Activated CD4-positive, alpha-beta T cell treated with anti-CD3 and anti-CD28 coated beads for 36 hours (primary cell): ENCODE measurements at regions of chr19 and their contacts with region 1.

Region 1: GRCh38 chr19:12564016-12564664 is 12.9 kb upstream of the ZNF564 start:
- DNase-seq: peak; percentile 95
- ATAC-seq: peak; percentile 98
- H3K4me3 Mint-ChIP-seq: peak overlapping the region; percentile 25
- H3K27ac Mint-ChIP-seq: no peak overlapping the region
- H3K4me1 Mint-ChIP-seq: peaks cover 5% of the 10 kb centered on the region
- H3K27me3 Mint-ChIP-seq: no peaks in the 10 kb centered on the region

Region 2: DNA sequence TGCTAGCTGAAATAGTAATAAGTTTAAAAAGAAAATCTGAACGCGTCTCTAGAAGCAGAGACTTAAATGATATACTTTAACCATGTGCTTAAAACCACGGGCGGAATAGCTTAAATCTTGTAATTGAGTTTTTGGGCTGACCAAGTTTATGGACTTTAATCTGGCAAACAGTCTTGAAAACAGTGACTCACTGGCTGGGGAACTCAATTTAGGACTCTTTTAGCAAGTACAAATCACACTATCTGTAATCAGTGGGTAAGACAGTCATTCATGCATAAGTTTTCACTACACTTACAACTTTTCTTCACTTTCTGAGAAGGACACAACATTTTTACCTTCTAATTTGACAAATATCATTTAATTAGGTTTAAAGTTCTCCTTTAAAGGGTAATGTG is 940.1 kb before region 1 on chr19:
- CTCF ChIA-PET with region 1: no interaction called
- POLR2A ChIA-PET with region 1: no interaction called
- intact Hi-C with region 1: no loop called
- DNase-seq: no peak
- ATAC-seq: peak; percentile 56
- H3K4me3 Mint-ChIP-seq: no peak overlapping the region
- H3K27ac Mint-ChIP-seq: no peak overlapping the region
- H3K4me1 Mint-ChIP-seq: peaks cover 16% of the 10 kb centered on the region
- H3K27me3 Mint-ChIP-seq: peaks cover 14% of the 10 kb centered on the region

Region 3: DNA sequence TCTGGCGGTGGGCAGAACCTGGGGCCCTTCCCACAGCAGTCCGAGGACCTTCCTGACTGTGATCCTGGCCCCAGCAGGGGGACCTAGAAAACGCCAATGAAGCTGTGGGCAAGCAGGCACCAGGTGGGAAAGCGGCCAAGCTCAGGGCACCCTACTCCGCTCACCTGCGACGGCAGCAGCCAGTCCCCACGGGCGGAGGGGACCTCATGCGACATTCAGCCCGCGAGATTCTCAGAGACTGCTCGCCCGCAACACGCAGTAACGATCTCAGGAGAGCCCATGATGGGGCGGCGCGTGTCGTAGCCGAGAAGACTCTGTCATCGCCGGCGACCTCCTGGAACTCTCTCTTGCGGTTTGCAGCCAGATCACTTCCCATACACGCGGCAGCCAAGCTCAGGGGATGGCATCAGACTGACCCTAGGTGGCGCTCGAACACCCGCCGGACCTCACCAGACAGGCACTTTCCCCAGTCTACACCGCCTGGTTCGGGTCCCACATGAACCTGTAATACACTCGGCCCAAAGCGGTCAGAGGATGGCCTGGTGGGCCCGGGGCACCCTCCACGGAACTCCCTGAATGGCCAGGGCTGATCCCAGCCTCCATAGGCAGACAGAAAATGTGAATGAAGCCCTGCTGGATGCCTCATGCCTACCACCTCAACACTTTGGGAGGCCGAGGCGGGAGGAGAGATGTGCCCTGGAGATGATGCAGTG is 75.9 kb after region 1 on chr19:
- CTCF ChIA-PET with region 1: interaction called, 6 read pairs
- POLR2A ChIA-PET with region 1: no interaction called
- intact Hi-C with region 1: loop called (anchors 1 kb)
- DNase-seq: peak; percentile 95
- ATAC-seq: peak; percentile 94
- H3K4me3 Mint-ChIP-seq: peak overlapping the region; percentile 70
- H3K27ac Mint-ChIP-seq: peak overlapping the region; percentile 85
- H3K4me1 Mint-ChIP-seq: peaks cover 23% of the 10 kb centered on the region
- H3K27me3 Mint-ChIP-seq: no peaks in the 10 kb centered on the region

Region 4: GRCh38 chr19:12672744-12673143 is 108.6 kb after region 1 on chr19:
- CTCF ChIA-PET with region 1: interaction called, 7 read pairs
- POLR2A ChIA-PET with region 1: interaction called, 3 read pairs
- intact Hi-C with region 1: loop called (anchors 1 kb)
- DNase-seq: no peak
- ATAC-seq: no peak
- H3K4me3 Mint-ChIP-seq: no peak overlapping the region
- H3K27ac Mint-ChIP-seq: no peak overlapping the region
- H3K4me1 Mint-ChIP-seq: peaks cover 33% of the 10 kb centered on the region
- H3K27me3 Mint-ChIP-seq: no peaks in the 10 kb centered on the region

Region 5: GRCh38 chr19:12757544-12758274 is 193.6 kb after region 1 on chr19:
- CTCF ChIA-PET with region 1: no interaction called
- POLR2A ChIA-PET with region 1: no interaction called
- intact Hi-C with region 1: loop called in 1 of 2 experiments (anchors 1 kb)
- DNase-seq: peak; percentile 83
- ATAC-seq: peak; percentile 84
- H3K4me3 Mint-ChIP-seq: peak overlapping the region; percentile 19
- H3K27ac Mint-ChIP-seq: no peak overlapping the region
- H3K4me1 Mint-ChIP-seq: peaks cover 6% of the 10 kb centered on the region
- H3K27me3 Mint-ChIP-seq: peaks cover 20% of the 10 kb centered on the region

Region 6: DNA sequence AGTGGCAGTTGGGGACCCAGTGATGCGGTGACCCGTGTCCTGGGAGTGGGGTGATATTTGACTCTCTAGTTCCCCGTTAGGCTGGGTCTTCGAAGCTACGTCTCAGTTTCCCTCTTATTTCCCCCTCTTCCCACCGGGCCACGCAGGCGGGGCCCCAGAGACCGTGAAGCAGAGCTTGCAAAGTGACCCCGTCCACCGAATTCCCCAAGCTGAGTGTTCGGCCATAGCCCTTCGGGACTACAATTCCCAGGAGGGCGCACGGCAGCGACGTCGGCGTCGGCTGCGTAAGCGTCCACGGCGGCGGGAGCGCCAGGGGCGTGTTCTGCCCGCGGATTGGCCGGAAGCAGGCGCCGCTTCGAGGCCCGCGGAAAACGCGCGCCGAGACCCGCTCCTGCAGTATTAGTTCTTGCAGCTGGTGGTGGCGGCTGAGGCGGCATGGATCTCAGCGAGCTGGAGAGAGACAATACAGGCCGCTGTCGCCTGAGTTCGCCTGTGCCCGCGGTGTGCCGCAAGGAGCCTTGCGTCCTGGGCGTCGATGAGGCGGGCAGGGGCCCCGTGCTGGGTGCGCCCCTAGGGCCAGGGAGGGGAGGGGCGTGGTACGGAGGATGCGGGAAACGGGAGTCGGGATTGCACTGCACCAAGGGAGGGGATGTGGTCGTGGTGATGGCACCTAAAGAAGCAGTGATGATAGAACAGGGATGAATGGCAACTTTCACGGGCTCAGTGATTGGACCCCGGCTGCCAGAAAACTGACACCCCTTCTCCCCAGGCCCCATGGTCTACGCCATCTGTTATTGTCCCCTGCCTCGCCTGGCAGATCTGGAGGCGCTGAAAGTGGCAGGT is 242.3 kb after region 1 on chr19 and contains the start of gene RNASEH2A:
- CTCF ChIA-PET with region 1: no interaction called
- POLR2A ChIA-PET with region 1: no interaction called
- intact Hi-C with region 1: no loop called
- DNase-seq: peak; percentile 94
- ATAC-seq: peak; percentile 93
- H3K4me3 Mint-ChIP-seq: peak within 1 kb of the TSS; percentile 89
- H3K27ac Mint-ChIP-seq: peak within 1 kb of the TSS; percentile 80
- H3K4me1 Mint-ChIP-seq: peaks cover 24% of the 10 kb centered on the region
- H3K27me3 Mint-ChIP-seq: no peaks in the 10 kb centered on the region
- total RNA-seq, gene RNASEH2A: 27.0 to 51.1 TPM

Region 7: DNA sequence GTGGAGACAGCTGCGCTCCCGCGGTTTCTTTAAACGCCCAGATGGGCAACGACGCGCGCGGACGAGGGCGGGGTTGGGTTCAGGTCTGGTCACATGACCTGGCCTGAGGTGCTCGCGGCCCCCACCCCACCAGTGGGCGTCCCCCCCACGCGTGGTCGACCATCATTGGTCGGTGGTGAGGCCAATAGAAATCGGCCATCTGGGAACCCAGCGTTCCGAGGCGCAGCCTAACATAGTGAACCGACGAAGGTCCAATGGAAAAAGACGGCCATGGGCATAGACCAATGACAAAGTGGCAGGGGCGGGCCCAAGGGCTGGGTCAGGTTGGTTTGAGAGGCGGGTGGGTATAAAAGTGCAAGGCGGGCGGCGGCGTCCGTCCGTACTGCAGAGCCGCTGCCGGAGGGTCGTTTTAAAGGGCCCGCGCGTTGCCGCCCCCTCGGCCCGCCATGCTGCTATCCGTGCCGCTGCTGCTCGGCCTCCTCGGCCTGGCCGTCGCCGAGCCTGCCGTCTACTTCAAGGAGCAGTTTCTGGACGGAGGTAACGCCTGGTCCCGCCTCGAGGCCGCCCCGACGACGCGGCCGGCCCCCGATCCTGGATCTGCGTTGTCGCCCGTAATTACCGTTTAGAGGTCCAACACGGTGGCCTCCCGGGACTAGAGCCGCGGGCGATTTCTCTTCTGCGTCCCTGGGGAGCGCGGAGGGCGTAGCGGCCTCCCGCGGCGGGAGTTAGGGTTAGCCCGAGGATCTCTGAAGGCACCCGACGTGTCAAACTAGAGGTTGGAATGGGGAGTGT is 374.3 kb after region 1 on chr19 and contains the start of gene CALR:
- CTCF ChIA-PET with region 1: no interaction called
- POLR2A ChIA-PET with region 1: no interaction called
- intact Hi-C with region 1: no loop called
- DNase-seq: peak; percentile 99
- ATAC-seq: peak; percentile 89
- H3K4me3 Mint-ChIP-seq: peak within 1 kb of the TSS; percentile 99
- H3K27ac Mint-ChIP-seq: peak within 1 kb of the TSS; percentile 96
- H3K4me1 Mint-ChIP-seq: peaks cover 59% of the 10 kb centered on the region
- H3K27me3 Mint-ChIP-seq: no peaks in the 10 kb centered on the region
- total RNA-seq, gene CALR: 557 to 569 TPM